Activated CD4-positive, alpha-beta memory T cell treated with anti-CD3 and anti-CD28 coated beads for 36 hours (primary cell): ENCODE measurements at regions of chr7 and their contacts with region 1.

Region 1: DNA sequence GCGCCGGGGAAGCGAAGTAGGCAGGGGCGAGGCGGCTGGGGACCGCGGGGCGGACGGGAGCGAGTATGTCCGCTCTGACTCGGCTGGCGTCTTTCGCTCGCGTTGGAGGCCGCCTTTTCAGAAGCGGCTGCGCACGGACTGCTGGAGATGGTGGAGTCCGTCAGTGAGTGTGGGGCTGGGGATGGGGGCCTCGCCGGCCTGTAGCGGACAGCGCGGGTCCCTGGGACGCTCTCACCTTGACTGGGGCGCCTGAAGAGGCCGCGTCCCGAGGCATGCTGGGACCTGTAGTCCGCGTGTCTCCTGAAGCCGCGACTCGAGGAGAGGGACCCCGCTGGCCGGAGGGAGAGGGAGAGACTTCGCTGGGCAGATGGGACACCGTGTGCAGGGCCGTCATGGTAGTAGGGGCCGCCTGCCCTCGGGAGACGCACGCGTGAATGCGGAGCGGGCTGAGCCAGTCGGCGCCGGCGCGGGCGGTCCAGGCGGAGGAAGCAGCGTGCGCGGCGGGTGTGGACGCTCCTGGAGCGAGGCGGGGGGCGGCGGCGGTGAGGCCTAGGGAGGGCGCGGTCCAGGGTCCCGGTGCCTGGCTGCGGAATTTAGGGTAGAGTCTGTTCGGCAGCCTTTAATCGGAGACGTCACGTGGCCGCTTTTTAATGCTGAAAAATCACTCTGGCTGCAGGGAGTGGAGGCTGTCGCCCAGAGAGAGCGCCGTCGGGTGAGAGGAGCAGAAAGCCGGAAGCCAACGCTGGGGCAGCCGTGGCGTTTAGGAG is at the start of gene NDUFB2:
- DNase-seq: peak; percentile 80
- H3K4me3 Mint-ChIP-seq: peak within 1 kb of the TSS; percentile 95
- H3K27ac Mint-ChIP-seq: peak within 1 kb of the TSS; percentile 97
- H3K4me1 Mint-ChIP-seq: peaks cover 32% of the 10 kb centered on the region
- H3K27me3 Mint-ChIP-seq: no peaks in the 10 kb centered on the region
- total RNA-seq, gene NDUFB2: 171 to 183 TPM

Region 2: GRCh38 chr7:140899883-140900282 is 203.0 kb after region 1 on chr7:
- CTCF ChIA-PET with region 1: no interaction called
- POLR2A ChIA-PET with region 1: no interaction called
- intact Hi-C with region 1: no loop called
- DNase-seq: no peak
- H3K4me3 Mint-ChIP-seq: no peak overlapping the region
- H3K27ac Mint-ChIP-seq: no peak overlapping the region
- H3K4me1 Mint-ChIP-seq: peaks cover 65% of the 10 kb centered on the region
- H3K27me3 Mint-ChIP-seq: no peaks in the 10 kb centered on the region

Region 3: GRCh38 chr7:141551094-141551781 is 854.4 kb after region 1 on chr7 and contains the start of gene AGK:
- CTCF ChIA-PET with region 1: no interaction called
- POLR2A ChIA-PET with region 1: no interaction called
- intact Hi-C with region 1: loop called (anchors 10 kb)
- DNase-seq: peak; percentile 87
- H3K4me3 Mint-ChIP-seq: peak within 1 kb of the TSS; percentile 91
- H3K27ac Mint-ChIP-seq: peak within 1 kb of the TSS; percentile 87
- H3K4me1 Mint-ChIP-seq: peaks cover 31% of the 10 kb centered on the region
- H3K27me3 Mint-ChIP-seq: no peaks in the 10 kb centered on the region
- total RNA-seq, gene AGK: 50.2 to 57.2 TPM